A549 (cell line): ENCODE measurements at regions of chr3 and their contacts with region 1.

Region 1: DNA sequence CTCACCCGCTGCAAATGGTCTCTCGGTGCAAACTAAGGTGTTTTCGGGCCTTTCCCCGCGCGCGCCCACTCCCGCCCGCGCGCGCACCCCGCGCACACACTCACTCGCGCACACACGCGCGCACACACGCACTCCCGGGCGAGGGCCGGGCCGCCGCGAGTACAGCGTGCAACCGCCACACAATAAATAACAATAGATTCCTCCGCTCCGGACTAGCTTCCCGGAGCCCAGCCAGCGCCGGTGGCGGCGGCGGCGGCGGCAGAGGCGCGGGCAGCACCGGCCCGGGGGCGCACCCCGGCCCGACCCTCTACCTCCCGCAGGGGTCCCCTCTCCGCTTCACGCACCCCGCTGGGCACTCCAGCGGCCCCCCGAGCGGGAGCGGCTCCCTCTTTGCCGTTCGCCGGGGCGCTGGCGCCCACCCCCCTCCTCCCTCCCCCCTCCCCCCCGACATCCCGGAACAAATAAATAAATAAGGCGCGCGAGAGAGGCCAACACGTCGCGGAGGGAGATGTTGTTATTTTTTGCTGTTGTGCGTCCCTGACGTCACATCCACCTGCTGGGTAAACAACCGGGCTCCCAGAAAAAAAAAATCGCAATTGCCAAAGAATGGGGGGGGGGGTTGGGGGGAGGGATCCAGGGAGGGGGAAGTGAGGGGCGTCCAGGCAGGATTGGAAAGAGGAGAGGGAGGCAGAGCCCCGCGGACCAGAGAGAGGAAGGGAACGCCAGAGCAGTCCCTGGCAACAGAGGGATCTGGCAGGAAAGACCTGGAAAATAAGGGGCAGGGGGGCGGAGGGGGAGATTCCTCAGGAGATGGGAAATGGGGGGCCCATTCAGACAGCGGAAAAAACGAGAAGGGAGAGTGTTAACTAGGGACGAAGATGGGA is at the start of gene FOXP1:
- DNase-seq: peak in 1 of 2 experiments; percentile 87
- ATAC-seq: peak; percentile 57 to 63
- H3K4me3 ChIP-seq: peak within 1 kb of the TSS; percentile 75
- H3K27ac ChIP-seq: peak within 1 kb of the TSS; percentile 95 to 100
- H3K4me1 ChIP-seq: peaks cover 40% of the 10 kb centered on the region
- CTCF ChIP-seq: no peak
- EP300 ChIP-seq: no peak; a peak in 1 of 5 replicates
- POLR2A ChIP-seq: peak; percentile 31
- RAD21 ChIP-seq: no peak; a peak in 1 of 5 replicates
- polyA plus RNA-seq, gene FOXP1: 13.9 and 16.3 TPM in 2 replicates

Region 2: GRCh38 chr3:71258116-71258515 is 325.7 kb before region 1 on chr3:
- CTCF ChIA-PET with region 1: interaction called, 3 read pairs
- POLR2A ChIA-PET with region 1: interaction called, 17 read pairs
- DNase-seq: peak; percentile 43 to 89
- ATAC-seq: peak; percentile 79 to 84
- H3K4me3 ChIP-seq: no peak overlapping the region
- H3K27ac ChIP-seq: peak overlapping the region; percentile 78 to 91
- H3K4me1 ChIP-seq: peaks cover 90% of the 10 kb centered on the region
- CTCF ChIP-seq: no peak
- EP300 ChIP-seq: peak; percentile 24 to 57; a peak in 2 of 5 replicates
- POLR2A ChIP-seq: no peak
- RAD21 ChIP-seq: no peak; a peak in 1 of 5 replicates

Region 3: DNA sequence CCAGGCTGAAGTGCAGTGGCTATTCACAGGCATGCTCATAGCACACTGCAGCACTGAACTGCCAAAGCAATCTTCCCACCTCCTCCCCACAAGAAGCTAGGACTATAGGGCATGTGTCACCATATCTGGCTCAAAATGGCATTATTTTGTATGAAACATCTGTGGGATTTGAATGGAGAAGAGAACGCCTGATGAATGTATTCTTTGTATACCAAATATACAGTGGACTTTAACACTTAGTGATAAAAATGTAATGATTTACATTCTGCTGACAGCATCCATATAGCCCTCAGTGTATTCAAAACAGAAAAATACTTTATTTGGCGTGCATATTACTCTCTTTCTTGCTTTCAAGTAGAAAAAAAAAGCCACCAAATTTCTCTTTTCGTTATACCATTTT is 258.1 kb before region 1 on chr3:
- CTCF ChIA-PET with region 1: no interaction called
- POLR2A ChIA-PET with region 1: no interaction called
- DNase-seq: no peak
- ATAC-seq: no peak
- H3K4me3 ChIP-seq: no peak overlapping the region
- H3K27ac ChIP-seq: no peak overlapping the region
- H3K4me1 ChIP-seq: no peaks in the 10 kb centered on the region
- CTCF ChIP-seq: no peak
- EP300 ChIP-seq: no peak
- POLR2A ChIP-seq: no peak
- RAD21 ChIP-seq: no peak

Region 4: GRCh38 chr3:71495708-71496472 is 87.9 kb before region 1 on chr3:
- CTCF ChIA-PET with region 1: interaction called, 14 read pairs
- POLR2A ChIA-PET with region 1: interaction called, 15 read pairs
- DNase-seq: peak; percentile 60 to 77
- ATAC-seq: peak; percentile 94 to 97
- H3K4me3 ChIP-seq: peak overlapping the region; percentile 32
- H3K27ac ChIP-seq: peak overlapping the region; percentile 85 to 93
- H3K4me1 ChIP-seq: peaks cover 33% of the 10 kb centered on the region
- CTCF ChIP-seq: no peak
- EP300 ChIP-seq: peak in 1 of 2 experiments; percentile 51; a peak in 1 of 5 replicates
- POLR2A ChIP-seq: no peak
- RAD21 ChIP-seq: no peak; a peak in 1 of 5 replicates

Region 5: GRCh38 chr3:71504250-71505036 is 79.4 kb before region 1 on chr3:
- CTCF ChIA-PET with region 1: interaction called, 39 read pairs
- POLR2A ChIA-PET with region 1: interaction called, 19 read pairs
- DNase-seq: peak; percentile 85
- ATAC-seq: peak; percentile 92
- H3K4me3 ChIP-seq: 0 out of 3 replicates have a peak overlapping the region, but pooled peaks have one; percentile 9
- H3K27ac ChIP-seq: peak overlapping the region; percentile 90 to 93
- H3K4me1 ChIP-seq: peaks cover 47% of the 10 kb centered on the region
- CTCF ChIP-seq: no peak
- EP300 ChIP-seq: peak; percentile 19 to 80; a peak in 3 of 5 replicates
- POLR2A ChIP-seq: no peak
- RAD21 ChIP-seq: 0 out of 5 replicates have a peak, but pooled peaks of 1 of the 2 experiments have one; percentile 12

Region 6: GRCh38 chr3:71512000-71512399 is 71.8 kb before region 1 on chr3:
- CTCF ChIA-PET with region 1: interaction called, 39 read pairs
- POLR2A ChIA-PET with region 1: interaction called, 18 read pairs
- DNase-seq: no peak
- ATAC-seq: peak in 1 of 2 experiments; percentile 28; a peak in 3 of 6 replicates
- H3K4me3 ChIP-seq: no peak overlapping the region
- H3K27ac ChIP-seq: peak overlapping the region; percentile 76 to 90
- H3K4me1 ChIP-seq: peaks cover 52% of the 10 kb centered on the region
- CTCF ChIP-seq: peak; percentile 15; the same call in 1 of the 3 replicates
- EP300 ChIP-seq: no peak
- POLR2A ChIP-seq: no peak
- RAD21 ChIP-seq: peak in 1 of 2 experiments; percentile 25; a peak in 2 of 5 replicates

Region 7: GRCh38 chr3:71537211-71537611 is 46.6 kb before region 1 on chr3:
- CTCF ChIA-PET with region 1: interaction called, 3 read pairs
- POLR2A ChIA-PET with region 1: interaction called, 16 read pairs
- DNase-seq: peak; percentile 55 to 65
- ATAC-seq: peak; percentile 81 to 91
- H3K4me3 ChIP-seq: no peak overlapping the region
- H3K27ac ChIP-seq: peak overlapping the region; percentile 68 to 90
- H3K4me1 ChIP-seq: peaks cover 56% of the 10 kb centered on the region
- CTCF ChIP-seq: no peak
- EP300 ChIP-seq: peak in 1 of 2 experiments; percentile 36; a peak in 1 of 5 replicates
- POLR2A ChIP-seq: no peak
- RAD21 ChIP-seq: no peak; a peak in 1 of 5 replicates

Region 8: GRCh38 chr3:71601811-71602210 is 18.0 kb after region 1 on chr3:
- CTCF ChIA-PET with region 1: interaction called, 23 read pairs
- POLR2A ChIA-PET with region 1: no interaction called
- DNase-seq: peak in 1 of 2 experiments; percentile 7
- ATAC-seq: no peak
- H3K4me3 ChIP-seq: no peak overlapping the region
- H3K27ac ChIP-seq: 0 out of 6 replicates have a peak overlapping the region, but pooled peaks of 1 of the 2 experiments have one; percentile 3
- H3K4me1 ChIP-seq: peaks cover 17% of the 10 kb centered on the region
- CTCF ChIP-seq: no peak
- EP300 ChIP-seq: no peak
- POLR2A ChIP-seq: no peak
- RAD21 ChIP-seq: no peak

Region 9: GRCh38 chr3:71905426-71905825 is 321.6 kb after region 1 on chr3:
- CTCF ChIA-PET with region 1: no interaction called
- POLR2A ChIA-PET with region 1: no interaction called
- DNase-seq: no peak
- ATAC-seq: no peak
- H3K4me3 ChIP-seq: no peak overlapping the region
- H3K27ac ChIP-seq: no peak overlapping the region
- H3K4me1 ChIP-seq: no peaks in the 10 kb centered on the region
- CTCF ChIP-seq: no peak
- EP300 ChIP-seq: no peak
- POLR2A ChIP-seq: no peak
- RAD21 ChIP-seq: no peak